ENCODE measurements at regions of chr9 and their contacts with region 1.

Region 1: DNA sequence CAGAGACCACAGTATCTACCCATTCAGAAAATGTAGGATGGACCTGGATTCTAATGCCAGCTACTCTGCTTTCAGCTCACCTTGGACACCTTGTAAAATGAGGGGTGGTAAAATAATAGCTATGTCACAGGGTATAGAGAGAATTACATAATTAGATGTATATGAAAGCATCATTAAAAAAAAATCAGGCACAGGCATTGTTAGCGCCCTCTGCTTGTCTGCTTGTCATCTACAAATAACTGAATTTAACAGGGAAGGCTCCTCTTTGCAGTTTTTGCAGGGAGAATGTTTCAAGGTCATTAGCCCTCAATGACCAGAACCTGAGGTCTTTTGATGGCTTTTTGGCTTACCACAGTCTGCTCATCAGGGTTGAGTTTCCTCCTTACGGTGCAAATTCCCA is 58.0 kb downstream of the GPR21 start:
- DNase-seq: peak in 1 of 3 donors; percentile 29
- H3K4me3 ChIP-seq: no peak overlapping the region
- H3K27ac ChIP-seq: no peak overlapping the region
- H3K4me1 ChIP-seq: no peaks in the 10 kb centered on the region
- H3K27me3 ChIP-seq: no peaks in the 10 kb centered on the region

Region 2: GRCh38 chr9:122325124-122325523 is 766.3 kb before region 1 on chr9:
- CTCF ChIA-PET with region 1: no interaction called
- POLR2A ChIA-PET with region 1: no interaction called
- DNase-seq: no peak
- H3K4me3 ChIP-seq: no peak overlapping the region
- H3K27ac ChIP-seq: no peak overlapping the region
- H3K4me1 ChIP-seq: peaks cover 0 to 27% (median 11%) of the 10 kb centered on the region in 4 experiments
- H3K27me3 ChIP-seq: no peaks in the 10 kb centered on the region

Region 3: DNA sequence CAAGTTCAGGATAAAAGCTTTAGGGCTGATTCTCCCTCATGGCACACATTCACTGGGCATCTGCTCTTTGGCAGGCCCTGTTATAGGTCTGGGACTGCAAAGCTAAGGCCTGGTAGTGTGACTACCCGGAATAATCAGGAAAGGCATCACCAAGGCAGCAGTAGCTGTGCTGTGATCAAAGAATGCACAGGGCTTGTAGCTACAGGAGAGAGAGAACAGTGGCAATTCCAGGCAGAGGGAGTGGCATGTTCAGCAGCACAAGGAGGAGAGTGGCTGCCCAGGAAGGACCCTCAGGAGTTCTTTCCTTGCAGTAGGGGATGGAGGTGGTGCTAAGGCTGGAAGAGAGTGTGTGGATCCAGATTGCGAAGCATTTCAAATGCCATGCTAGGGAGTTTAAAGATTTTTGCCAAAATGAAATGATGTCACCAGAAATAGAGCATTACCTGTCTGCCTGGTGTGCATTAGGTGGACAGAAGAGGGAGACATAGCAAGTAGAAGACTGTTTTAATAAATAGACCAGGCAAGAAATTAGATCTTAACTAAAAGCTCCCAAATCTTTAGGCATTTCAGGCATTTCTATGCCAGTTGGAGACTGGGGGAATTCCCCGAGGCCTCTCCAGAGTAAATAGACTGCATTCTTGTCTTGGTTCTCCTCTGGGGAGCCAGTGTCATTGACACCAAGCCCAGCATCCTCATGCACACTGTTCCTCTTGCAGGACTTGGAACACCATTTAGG is 11.1 kb after region 1 on chr9:
- CTCF ChIA-PET with region 1: interaction called, 37 read pairs
- POLR2A ChIA-PET with region 1: no interaction called
- DNase-seq: no peak
- H3K4me3 ChIP-seq: no peak overlapping the region
- H3K27ac ChIP-seq: peak overlapping the region in 1 of 2 experiments; percentile 6
- H3K4me1 ChIP-seq: no peaks in the 10 kb centered on the region
- H3K27me3 ChIP-seq: no peaks in the 10 kb centered on the region